Thyroid gland (tissue), 4 donors: ENCODE measurements at regions of chr14 and their contacts with region 1.

Region 1: DNA sequence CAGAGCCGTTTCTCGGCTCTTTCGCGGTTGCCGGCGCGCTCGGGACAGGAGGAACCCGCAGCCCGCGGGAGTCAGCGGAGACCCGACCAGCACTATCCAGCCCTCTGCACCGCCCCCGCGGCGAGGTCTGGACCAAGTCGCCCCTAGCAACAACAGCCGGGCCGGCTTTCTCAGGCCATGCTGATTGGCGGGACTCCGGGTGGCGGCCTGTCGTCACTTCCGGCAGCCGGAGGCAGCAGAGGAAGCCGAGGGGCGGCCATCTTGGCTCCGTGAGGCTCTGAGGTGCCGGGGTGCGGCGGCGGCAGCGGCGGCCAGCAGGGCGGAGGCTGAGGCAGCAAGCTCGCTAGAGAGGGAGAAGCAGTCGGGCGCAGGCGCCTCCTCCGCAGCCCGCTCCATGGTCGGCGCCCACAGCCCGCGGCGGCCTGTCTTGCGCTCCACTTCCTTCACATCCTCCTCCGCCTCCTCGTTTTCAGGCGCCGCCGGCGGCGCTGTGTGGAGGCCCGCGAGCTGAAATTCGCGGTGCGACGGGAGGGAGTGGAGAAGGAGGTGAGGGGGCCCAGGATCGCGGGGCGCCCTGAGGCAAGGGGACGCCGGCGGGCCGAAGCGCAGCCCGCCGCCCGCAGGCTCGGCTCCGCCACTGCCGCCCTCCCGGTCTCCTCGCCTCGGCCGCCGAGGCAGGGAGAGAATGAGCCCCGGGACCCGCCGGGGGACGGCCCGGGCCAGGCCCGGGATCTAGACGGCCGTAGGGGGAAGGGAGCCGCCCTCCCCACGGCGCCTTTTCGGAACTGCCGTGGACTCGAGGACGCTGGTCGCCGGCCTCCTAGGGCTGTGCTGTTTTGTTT is at the start of gene MARK3:
- DNase-seq: peak; percentile 99
- H3K4me3 ChIP-seq: peak within 1 kb of the TSS; percentile 68 to 78 (median 77)
- H3K27ac ChIP-seq: peak within 1 kb of the TSS; percentile 95 to 99 (median 96)
- H3K4me1 ChIP-seq: peaks cover 22 to 29% of the 10 kb centered on the region in 2 donors
- H3K27me3 ChIP-seq: no peaks in the 10 kb centered on the region
- CTCF ChIP-seq: peak in 2 of 6 experiments; percentile 27 to 29
- POLR2A ChIP-seq: peak; percentile 59 to 97
- total RNA-seq, gene MARK3: 105 to 164 (median 114) TPM

Region 2: GRCh38 chr14:103334644-103335622 is 50.4 kb before region 1 on chr14:
- intact Hi-C with region 1: loop called (anchors 5 kb)
- DNase-seq: peak; percentile 55 to 59
- H3K4me3 ChIP-seq: peak overlapping the region; percentile 77 to 99 (median 98)
- H3K27ac ChIP-seq: peak overlapping the region; percentile 99 to 100 (median 100)
- H3K4me1 ChIP-seq: peaks cover 17 to 29% of the 10 kb centered on the region in 2 donors
- H3K27me3 ChIP-seq: no peaks in the 10 kb centered on the region
- CTCF ChIP-seq: no peak
- POLR2A ChIP-seq: peak in 1 of 2 donors; percentile 10

Region 3: DNA sequence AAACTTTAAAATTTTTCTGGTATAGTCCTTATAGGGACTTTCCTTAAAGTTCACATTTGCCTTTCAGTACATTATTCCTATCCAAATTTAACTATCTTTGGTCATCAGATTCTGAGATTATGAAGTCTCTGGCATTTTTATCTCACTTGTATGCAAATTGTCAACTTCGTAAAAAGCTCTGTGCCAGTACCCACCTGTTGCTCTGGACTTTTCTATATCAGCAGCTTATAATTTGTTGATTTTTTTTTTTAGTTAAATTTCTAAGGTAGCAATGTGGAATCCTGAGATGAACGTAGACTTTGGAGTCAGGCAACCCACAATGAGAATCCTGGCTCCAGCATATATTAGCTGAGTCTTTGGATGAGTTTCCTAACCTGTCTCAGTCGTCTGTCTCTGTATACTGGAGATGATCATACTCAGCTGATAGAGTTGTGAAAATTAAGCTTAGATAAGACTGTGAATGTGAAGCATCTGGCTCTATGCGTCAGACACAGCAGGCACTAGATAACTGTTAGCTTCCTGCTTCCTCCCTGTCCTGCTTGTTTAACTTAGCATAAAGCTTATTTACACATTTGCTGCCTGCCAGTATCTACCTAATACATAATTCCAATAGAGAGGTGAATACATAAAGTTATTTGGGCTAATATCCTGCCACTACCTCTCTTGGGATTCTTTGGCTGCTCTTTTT is 59.6 kb after region 1 on chr14:
- intact Hi-C with region 1: loop called (anchors 10 kb)
- DNase-seq: no peak
- H3K4me3 ChIP-seq: no peak overlapping the region
- H3K27ac ChIP-seq: peak overlapping the region; percentile 79 to 92 (median 84)
- H3K4me1 ChIP-seq: peaks cover 47 to 58% of the 10 kb centered on the region in 2 donors
- H3K27me3 ChIP-seq: no peaks in the 10 kb centered on the region
- CTCF ChIP-seq: no peak
- POLR2A ChIP-seq: no peak